ENCODE measurements at regions of chr12 and their contacts with region 1.

Region 1: DNA sequence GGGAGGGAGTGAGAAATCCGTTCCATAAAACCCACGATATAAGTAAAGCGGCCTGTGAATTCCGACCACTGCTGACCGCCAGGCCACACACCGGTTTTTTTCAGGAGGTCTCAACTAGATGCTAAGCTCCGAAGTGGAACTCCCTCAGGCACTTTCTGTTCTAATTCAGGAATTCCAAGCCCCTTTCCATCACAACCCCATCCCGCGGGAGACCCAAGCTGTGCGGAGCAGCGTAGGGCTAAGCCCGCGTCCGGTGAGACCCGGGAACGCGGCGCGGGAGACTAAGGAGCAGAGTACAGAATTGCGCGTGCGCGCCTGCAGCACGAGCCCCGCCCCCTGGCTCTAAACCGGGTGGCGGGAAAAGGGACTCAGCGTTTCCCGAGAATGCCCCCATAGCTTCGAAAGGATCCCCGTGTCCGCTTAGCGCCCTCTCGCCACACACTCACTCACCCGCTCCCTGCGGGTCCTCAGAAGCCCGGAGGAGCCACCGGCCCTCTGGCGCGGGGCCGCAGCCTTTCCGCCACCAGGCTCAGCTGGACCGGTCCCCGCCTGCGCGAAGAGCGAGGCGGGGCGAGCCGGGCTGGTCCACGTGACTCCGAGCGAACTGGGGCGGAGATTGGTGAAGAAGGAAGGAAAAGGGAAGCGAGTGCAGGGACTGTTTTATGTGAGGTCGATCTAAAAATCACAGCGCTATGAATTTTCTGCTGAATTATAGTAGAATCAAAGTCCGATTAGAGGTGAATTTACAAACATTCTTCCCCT is at the start of gene TIMELESS:
- DNase-seq: peak; percentile 74 to 89 (median 85)
- ATAC-seq: peak; percentile 98
- H3K4me3 ChIP-seq: peak within 1 kb of the TSS; percentile 97
- H3K4me3 Mint-ChIP-seq: peak within 1 kb of the TSS; percentile 77 to 94 (median 92)
- H3K27ac ChIP-seq: peak within 1 kb of the TSS; percentile 74
- H3K27ac Mint-ChIP-seq: peak within 1 kb of the TSS; percentile 86 to 98 (median 93)
- H3K4me1 ChIP-seq: peaks cover 0 to 7% of the 10 kb centered on the region in 2 donors
- H3K4me1 Mint-ChIP-seq: peaks cover 12 to 36% (median 24%) of the 10 kb centered on the region in 7 donors
- H3K27me3 ChIP-seq: no peaks in the 10 kb centered on the region
- H3K27me3 Mint-ChIP-seq: no peaks in the 10 kb centered on the region
- total RNA-seq, gene TIMELESS: 4.4 to 42.3 (median 5.4) TPM

Region 2: DNA sequence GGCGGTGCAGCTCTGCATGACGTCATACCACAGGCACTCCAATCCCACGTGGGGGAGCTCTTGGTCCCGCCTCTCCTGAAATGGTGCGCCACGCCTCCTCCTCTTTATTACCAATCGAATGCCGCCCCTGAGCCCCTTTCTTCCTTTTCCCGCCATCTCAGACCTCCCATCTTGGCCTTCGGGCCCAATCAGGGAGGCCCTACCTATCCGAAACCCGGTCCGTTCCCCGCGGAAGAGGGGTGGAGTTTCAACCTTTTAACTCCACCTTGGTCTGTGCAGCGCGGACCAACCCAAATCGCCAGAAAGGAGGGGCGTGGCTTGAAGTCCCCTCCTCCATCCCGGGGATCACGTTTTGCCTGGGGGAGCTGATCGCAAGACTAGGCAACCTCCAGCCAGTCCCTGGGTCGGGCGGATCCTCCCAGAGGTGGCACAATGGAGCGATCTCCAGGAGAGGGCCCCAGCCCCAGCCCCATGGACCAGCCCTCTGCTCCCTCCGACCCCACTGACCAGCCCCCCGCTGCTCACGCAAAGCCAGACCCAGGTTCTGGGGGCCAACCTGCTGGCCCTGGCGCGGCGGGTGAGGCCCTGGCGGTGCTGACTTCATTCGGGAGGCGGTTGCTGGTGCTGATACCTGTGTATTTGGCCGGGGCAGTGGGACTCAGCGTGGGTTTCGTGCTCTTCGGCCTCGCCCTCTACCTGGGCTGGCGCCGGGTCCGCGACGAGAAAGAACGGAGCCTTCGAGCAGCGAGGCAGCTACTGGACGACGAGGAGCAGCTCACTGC is 321.0 kb before region 1 on chr12 and contains the start of gene ESYT1:
- CTCF ChIA-PET with region 1: no interaction called
- POLR2A ChIA-PET with region 1: interaction called, 3 read pairs
- intact Hi-C with region 1: loop called in 1 of 2 experiments (anchors 5 kb)
- DNase-seq: peak; percentile 75 to 100 (median 98)
- ATAC-seq: peak; percentile 94
- H3K4me3 ChIP-seq: peak within 1 kb of the TSS; percentile 77
- H3K4me3 Mint-ChIP-seq: peak within 1 kb of the TSS; percentile 95 to 100 (median 98)
- H3K27ac ChIP-seq: peak within 1 kb of the TSS; percentile 84
- H3K27ac Mint-ChIP-seq: peak within 1 kb of the TSS; percentile 86 to 99 (median 91)
- H3K4me1 ChIP-seq: peaks cover 39 to 54% of the 10 kb centered on the region in 2 donors
- H3K4me1 Mint-ChIP-seq: peaks cover 40 to 76% (median 65%) of the 10 kb centered on the region in 7 donors
- H3K27me3 ChIP-seq: no peaks in the 10 kb centered on the region
- H3K27me3 Mint-ChIP-seq: no peaks in the 10 kb centered on the region
- total RNA-seq, gene ESYT1: 121 to 300 (median 221) TPM

Region 3: GRCh38 chr12:56258057-56258819 is 190.8 kb before region 1 on chr12 and contains the start of gene ANKRD52:
- CTCF ChIA-PET with region 1: interaction called, 4 read pairs
- POLR2A ChIA-PET with region 1: interaction called, 3 read pairs
- intact Hi-C with region 1: loop called in 1 of 2 experiments (anchors 2 kb)
- DNase-seq: peak; percentile 69 to 92 (median 84)
- ATAC-seq: peak; percentile 99
- H3K4me3 ChIP-seq: peak within 1 kb of the TSS; percentile 99
- H3K4me3 Mint-ChIP-seq: peak within 1 kb of the TSS; percentile 87 to 97 (median 93)
- H3K27ac ChIP-seq: peak within 1 kb of the TSS; percentile 90
- H3K27ac Mint-ChIP-seq: peak within 1 kb of the TSS; percentile 83 to 94 (median 90)
- H3K4me1 ChIP-seq: peaks cover 18 to 19% of the 10 kb centered on the region in 2 donors
- H3K4me1 Mint-ChIP-seq: peaks cover 13 to 27% (median 22%) of the 10 kb centered on the region in 7 donors
- H3K27me3 ChIP-seq: no peaks in the 10 kb centered on the region
- H3K27me3 Mint-ChIP-seq: peaks cover 0 to 2% (median 0%) of the 10 kb centered on the region in 5 donors
- total RNA-seq, gene ANKRD52: 26.9 to 64.4 (median 40.7) TPM

Region 4: GRCh38 chr12:56266693-56267442 is 182.2 kb before region 1 on chr12 and contains the start of gene COQ10A:
- CTCF ChIA-PET with region 1: interaction called, 4 read pairs
- POLR2A ChIA-PET with region 1: no interaction called
- intact Hi-C with region 1: loop called in 1 of 2 experiments (anchors 5 kb)
- DNase-seq: peak; percentile 78 to 92 (median 89)
- ATAC-seq: peak; percentile 93
- H3K4me3 ChIP-seq: peak within 1 kb of the TSS; percentile 88
- H3K4me3 Mint-ChIP-seq: peak within 1 kb of the TSS; percentile 83 to 100 (median 96)
- H3K27ac ChIP-seq: peak within 1 kb of the TSS; percentile 94
- H3K27ac Mint-ChIP-seq: peak within 1 kb of the TSS; percentile 89 to 97 (median 94)
- H3K4me1 ChIP-seq: peaks cover 0 to 8% of the 10 kb centered on the region in 2 donors
- H3K4me1 Mint-ChIP-seq: peaks cover 0 to 22% (median 20%) of the 10 kb centered on the region in 7 donors
- H3K27me3 ChIP-seq: no peaks in the 10 kb centered on the region
- H3K27me3 Mint-ChIP-seq: peaks cover 0 to 2% (median 0%) of the 10 kb centered on the region in 5 donors
- total RNA-seq, gene COQ10A: 22.5 to 39.4 (median 31.5) TPM

Region 5: DNA sequence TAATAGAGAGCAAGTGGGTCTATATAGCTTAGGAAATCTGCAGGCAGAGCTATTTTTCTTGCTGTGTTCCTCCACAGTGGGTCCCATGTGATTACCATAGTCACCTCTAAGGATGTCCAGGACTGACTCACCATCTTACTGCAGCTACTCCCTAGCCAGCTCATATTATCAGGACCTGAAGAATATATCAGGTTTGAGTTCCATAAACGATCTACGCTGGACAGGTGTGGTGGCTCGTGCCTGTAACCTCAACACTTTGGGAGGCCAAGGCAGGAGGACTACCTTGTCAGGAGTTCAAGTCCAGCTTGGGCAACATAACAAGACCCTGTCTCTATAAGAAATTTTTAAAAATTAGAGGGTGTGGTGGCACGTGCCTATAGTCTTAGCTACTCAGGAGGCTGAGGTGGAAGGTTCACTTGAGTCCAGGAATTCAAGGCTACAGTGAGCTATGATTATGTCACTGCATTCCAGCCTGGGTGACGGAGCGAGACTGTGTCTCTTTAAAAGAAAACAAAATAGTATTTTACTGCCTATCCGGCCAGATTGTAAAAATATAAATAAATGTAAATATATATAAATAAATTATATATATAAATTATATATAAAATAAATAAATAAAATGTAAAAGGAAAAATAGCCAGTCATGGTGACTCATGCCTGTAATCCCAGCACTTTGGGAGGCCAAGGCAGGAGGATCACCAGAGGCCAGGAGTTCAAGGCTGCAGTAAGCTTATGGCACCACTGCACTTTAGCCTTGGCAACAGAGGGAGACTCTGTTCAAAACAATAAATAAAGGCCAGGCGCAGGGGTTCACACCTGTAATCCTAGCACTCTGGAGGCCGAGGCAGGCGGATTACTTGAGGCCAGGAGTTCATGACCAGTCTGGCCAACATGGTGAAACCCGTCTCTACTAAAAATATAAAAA is 12.5 kb after region 1 on chr12:
- CTCF ChIA-PET with region 1: interaction called, 22 read pairs
- POLR2A ChIA-PET with region 1: interaction called, 18 read pairs
- intact Hi-C with region 1: loop called (anchors 1 kb)
- DNase-seq: no peak
- ATAC-seq: no peak
- H3K4me3 ChIP-seq: no peak overlapping the region
- H3K4me3 Mint-ChIP-seq: no peak overlapping the region
- H3K27ac ChIP-seq: no peak overlapping the region
- H3K27ac Mint-ChIP-seq: no peak overlapping the region
- H3K4me1 ChIP-seq: peaks cover 0 to 6% of the 10 kb centered on the region in 2 donors
- H3K4me1 Mint-ChIP-seq: peaks cover 0 to 10% (median 5%) of the 10 kb centered on the region in 7 donors
- H3K27me3 ChIP-seq: no peaks in the 10 kb centered on the region
- H3K27me3 Mint-ChIP-seq: no peaks in the 10 kb centered on the region

Measured in naive thymus-derived CD4-positive, alpha-beta T cell (primary cell).